ENCODE measurements at regions of chr7 and their contacts with region 1.

Region 1: GRCh38 chr7:150420987-150421674 is 29.3 kb upstream of the GIMAP8 start:
- DNase-seq: peak; percentile 94
- ATAC-seq: peak; percentile 100
- H3K4me3 Mint-ChIP-seq: no peak overlapping the region
- H3K27ac Mint-ChIP-seq: peak overlapping the region; percentile 60
- H3K4me1 Mint-ChIP-seq: peaks cover 7% of the 10 kb centered on the region
- H3K27me3 Mint-ChIP-seq: no peaks in the 10 kb centered on the region
- CTCF ChIP-seq: peak; percentile 94

Region 2: GRCh38 chr7:150356265-150356897 is 64.8 kb before region 1 on chr7:
- CTCF ChIA-PET with region 1: interaction called, 12 read pairs
- POLR2A ChIA-PET with region 1: interaction called, 3 read pairs
- intact Hi-C with region 1: loop called (anchors 1 kb)
- DNase-seq: peak; percentile 38
- ATAC-seq: peak; percentile 17
- H3K4me3 Mint-ChIP-seq: peak overlapping the region; percentile 2
- H3K27ac Mint-ChIP-seq: no peak overlapping the region
- H3K4me1 Mint-ChIP-seq: peaks cover 38% of the 10 kb centered on the region
- H3K27me3 Mint-ChIP-seq: no peaks in the 10 kb centered on the region
- CTCF ChIP-seq: peak; percentile 89

Region 3: GRCh38 chr7:150432915-150433892 is 12.1 kb after region 1 on chr7:
- CTCF ChIA-PET with region 1: interaction called, 10 read pairs
- POLR2A ChIA-PET with region 1: no interaction called
- intact Hi-C with region 1: no loop called
- DNase-seq: no peak
- ATAC-seq: peak; percentile 12
- H3K4me3 Mint-ChIP-seq: peak overlapping the region; percentile 19
- H3K27ac Mint-ChIP-seq: peak overlapping the region; percentile 26
- H3K4me1 Mint-ChIP-seq: peaks cover 30% of the 10 kb centered on the region
- H3K27me3 Mint-ChIP-seq: peaks cover 2% of the 10 kb centered on the region
- CTCF ChIP-seq: no peak

Measured in activated CD8-positive, alpha-beta T cell treated with anti-CD3 and anti-CD28 coated beads for 36 hours (primary cell).